ENCODE measurements at regions of chr11 and their contacts with region 1.

Region 1: GRCh38 chr11:117410861-117411710 is 83.4 kb downstream of the CEP164 start:
- DNase-seq: no peak
- H3K4me3 ChIP-seq: no peak overlapping the region
- H3K27ac ChIP-seq: no peak overlapping the region
- H3K4me1 ChIP-seq: peaks cover 0 to 4% (median 0%) of the 10 kb centered on the region in 4 experiments; a peak in 2 of 7 replicates
- H3K27me3 ChIP-seq: no peaks in the 10 kb centered on the region
- CTCF ChIP-seq: no peak
- EP300 ChIP-seq: no peak
- POLR2A ChIP-seq: no peak
- RAD21 ChIP-seq: no peak

Region 2: GRCh38 chr11:117395476-117396155 is 15.5 kb before region 1 on chr11:
- CTCF ChIA-PET with region 1: interaction called, 11 read pairs
- POLR2A ChIA-PET with region 1: interaction called, 3 read pairs
- DNase-seq: no peak
- H3K4me3 ChIP-seq: no peak overlapping the region
- H3K27ac ChIP-seq: no peak overlapping the region
- H3K4me1 ChIP-seq: no peaks in the 10 kb centered on the region
- H3K27me3 ChIP-seq: no peaks in the 10 kb centered on the region
- CTCF ChIP-seq: no peak
- EP300 ChIP-seq: no peak
- POLR2A ChIP-seq: no peak
- RAD21 ChIP-seq: no peak